T-cell (primary cell): ENCODE measurements at regions of chr9 and their contacts with region 1.

Region 1: GRCh38 chr9:117903453-117903852 is 199.2 kb downstream of the TLR4 start:
- DNase-seq: no peak
- ATAC-seq: no peak
- H3K4me3 ChIP-seq: no peak overlapping the region
- H3K4me3 Mint-ChIP-seq: no peak overlapping the region
- H3K27ac ChIP-seq: no peak overlapping the region
- H3K27ac Mint-ChIP-seq: no peak overlapping the region
- H3K4me1 ChIP-seq: no peaks in the 10 kb centered on the region
- H3K4me1 Mint-ChIP-seq: no peaks in the 10 kb centered on the region
- H3K27me3 ChIP-seq: no peaks in the 10 kb centered on the region
- H3K27me3 Mint-ChIP-seq: peaks cover 7 to 14% of the 10 kb centered on the region in 2 donors

Region 2: DNA sequence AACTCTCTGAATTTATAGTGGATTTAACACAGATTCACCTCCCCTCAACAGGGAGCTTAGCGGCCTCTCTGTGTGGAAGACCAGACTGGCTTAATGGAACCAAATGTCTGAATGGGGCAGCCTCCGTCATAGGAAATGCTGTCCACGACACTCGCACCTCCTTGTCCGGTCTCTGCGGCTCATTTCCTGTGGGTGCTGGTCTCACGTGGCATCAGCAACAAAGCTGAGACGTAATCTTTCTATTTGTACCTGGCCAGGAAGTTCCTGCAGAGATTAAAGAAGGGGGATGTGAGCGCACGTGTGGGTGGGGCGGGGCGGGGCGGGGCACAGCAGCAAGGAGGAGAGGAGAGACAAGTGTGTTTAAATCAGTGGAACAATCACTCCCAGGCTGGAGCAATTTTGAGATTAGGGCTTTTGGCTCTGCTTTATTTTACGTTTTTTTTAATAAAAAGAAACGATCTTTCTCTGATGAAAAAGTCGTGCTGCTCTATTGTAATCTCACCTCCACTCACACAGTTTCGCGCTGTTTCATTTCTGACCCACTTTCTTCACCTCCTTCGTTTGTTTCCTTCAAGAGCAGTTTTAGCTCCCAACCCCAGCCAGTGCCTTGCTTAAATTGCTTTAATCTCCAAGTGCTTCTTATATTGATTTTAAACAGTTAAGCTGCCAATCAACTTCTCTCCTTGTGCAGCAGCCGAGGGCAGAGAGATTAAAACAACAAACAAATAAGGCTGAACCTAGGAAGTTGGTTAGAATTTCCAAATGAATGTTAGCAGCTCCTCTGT is 356.4 kb before region 1 on chr9:
- CTCF ChIA-PET with region 1: interaction called in 1 of 2 experiments, 13 read pairs
- POLR2A ChIA-PET with region 1: no interaction called
- DNase-seq: peak in 11 of 35 experiments; percentile 0 to 27 (median 3)
- ATAC-seq: peak in 1 of 4 experiments; percentile 68
- H3K4me3 ChIP-seq: no peak overlapping the region
- H3K4me3 Mint-ChIP-seq: peak overlapping the region in 1 of 3 donors; percentile 54
- H3K27ac ChIP-seq: no peak overlapping the region
- H3K27ac Mint-ChIP-seq: no peak overlapping the region
- H3K4me1 ChIP-seq: peaks cover 0 to 4% of the 10 kb centered on the region in 2 experiments
- H3K4me1 Mint-ChIP-seq: peaks cover 0 to 11% (median 7%) of the 10 kb centered on the region in 3 donors
- H3K27me3 ChIP-seq: no peaks in the 10 kb centered on the region
- H3K27me3 Mint-ChIP-seq: no peaks in the 10 kb centered on the region

Region 3: DNA sequence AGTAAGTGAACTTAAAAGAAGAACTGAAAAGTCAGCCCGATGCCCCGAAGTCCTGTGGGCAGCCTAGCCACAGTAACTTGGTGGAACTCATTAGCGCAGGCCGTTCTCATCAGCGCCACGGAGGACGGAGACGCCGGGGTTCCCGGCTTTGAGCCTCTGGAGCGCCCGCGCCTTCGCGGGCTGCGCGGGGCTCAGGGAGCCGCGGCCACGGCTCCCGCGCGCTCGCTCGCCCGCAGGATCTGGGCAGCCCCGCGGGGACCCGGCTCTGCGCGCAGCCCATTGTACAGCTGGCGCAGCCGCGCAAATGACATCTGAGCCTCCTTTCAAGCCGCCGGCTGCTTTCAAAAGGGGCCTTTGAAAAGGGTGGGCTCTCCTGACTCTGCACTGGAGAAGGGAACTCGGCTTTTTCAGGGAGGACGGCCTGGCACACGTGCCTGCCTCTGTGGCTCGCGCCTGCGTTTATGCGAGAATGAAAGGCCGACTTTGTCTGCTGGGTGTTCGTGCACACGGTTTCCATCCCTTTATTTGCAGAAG is 158.5 kb before region 1 on chr9:
- CTCF ChIA-PET with region 1: no interaction called
- POLR2A ChIA-PET with region 1: no interaction called
- DNase-seq: no peak
- ATAC-seq: no peak
- H3K4me3 ChIP-seq: no peak overlapping the region
- H3K4me3 Mint-ChIP-seq: no peak overlapping the region
- H3K27ac ChIP-seq: no peak overlapping the region
- H3K27ac Mint-ChIP-seq: no peak overlapping the region
- H3K4me1 ChIP-seq: no peaks in the 10 kb centered on the region
- H3K4me1 Mint-ChIP-seq: peaks cover 0 to 3% (median 3%) of the 10 kb centered on the region in 3 donors
- H3K27me3 ChIP-seq: peaks cover 6 to 16% of the 10 kb centered on the region in 2 experiments
- H3K27me3 Mint-ChIP-seq: peaks cover 29 to 36% of the 10 kb centered on the region in 2 donors

Region 4: DNA sequence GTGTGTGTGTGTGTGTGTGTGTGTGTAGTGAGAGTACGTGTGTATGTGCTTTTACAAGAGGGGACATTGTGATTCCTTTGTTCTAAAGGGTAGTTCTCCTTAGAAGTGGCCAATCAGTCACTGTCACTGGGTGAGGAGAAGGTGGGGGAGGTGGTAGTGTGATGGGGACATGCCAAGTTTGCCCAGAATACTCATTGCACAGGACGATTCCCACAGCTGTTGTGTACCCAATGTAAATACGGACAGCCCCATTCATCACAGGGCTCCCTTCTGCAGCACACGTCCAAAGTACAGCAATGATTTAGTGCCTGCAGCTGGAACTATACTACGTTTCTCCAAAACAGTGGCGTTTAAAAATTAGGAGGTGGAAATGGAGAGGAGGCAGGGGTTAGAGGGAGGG is 88.6 kb after region 1 on chr9:
- CTCF ChIA-PET with region 1: no interaction called
- POLR2A ChIA-PET with region 1: no interaction called
- DNase-seq: no peak
- ATAC-seq: no peak
- H3K4me3 ChIP-seq: no peak overlapping the region
- H3K4me3 Mint-ChIP-seq: no peak overlapping the region
- H3K27ac ChIP-seq: no peak overlapping the region
- H3K27ac Mint-ChIP-seq: no peak overlapping the region
- H3K4me1 ChIP-seq: no peaks in the 10 kb centered on the region
- H3K4me1 Mint-ChIP-seq: no peaks in the 10 kb centered on the region
- H3K27me3 ChIP-seq: no peaks in the 10 kb centered on the region
- H3K27me3 Mint-ChIP-seq: peaks cover 0 to 5% of the 10 kb centered on the region in 2 donors